IMR-90 (cell line): ENCODE measurements at regions of chr17 and their contacts with region 1.

Region 1: DNA sequence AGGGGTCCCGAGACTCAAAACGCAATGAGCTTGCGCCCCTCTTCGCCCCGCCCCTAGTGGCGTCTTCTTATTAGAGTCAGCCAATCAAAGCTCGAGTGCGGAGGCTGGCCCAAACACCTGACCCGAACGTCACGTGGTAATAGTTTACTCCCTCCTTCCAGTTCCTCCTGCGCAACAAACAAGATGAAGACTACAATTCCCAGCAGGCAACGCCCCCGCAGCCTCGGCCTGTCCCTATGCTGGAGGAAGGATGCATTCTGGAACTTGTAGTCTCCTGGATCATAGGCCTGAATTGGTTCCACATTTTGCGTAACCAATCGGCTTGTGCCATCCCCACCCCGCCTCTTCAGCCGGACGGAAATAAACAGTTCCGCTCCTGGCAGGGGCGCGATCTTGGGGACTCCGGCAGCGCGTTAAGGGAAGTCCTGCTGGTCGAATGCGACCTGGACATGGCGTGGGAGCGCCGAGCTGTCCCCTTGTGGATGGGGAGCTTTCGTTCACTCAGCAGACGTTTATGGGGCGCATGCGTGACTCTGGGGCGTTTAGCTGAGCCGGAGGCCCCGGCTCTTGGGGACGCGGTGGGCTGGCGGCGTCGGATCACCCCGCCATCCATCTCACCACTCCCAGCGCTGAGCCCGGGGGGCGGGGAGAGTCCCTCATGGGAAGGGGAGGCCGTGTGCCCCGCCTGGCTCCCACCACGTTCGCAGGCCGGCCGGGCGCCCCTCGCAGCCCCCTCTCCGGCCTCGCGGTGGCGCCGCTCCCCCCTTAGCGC is at the start of gene WBP2:
- DNase-seq: peak; percentile 100
- ATAC-seq: peak; percentile 96
- H3K4me3 ChIP-seq: peak within 1 kb of the TSS; percentile 68
- H3K27ac ChIP-seq: peak within 1 kb of the TSS; percentile 70
- H3K4me1 ChIP-seq: peaks cover 11% of the 10 kb centered on the region
- H3K27me3 ChIP-seq: no peaks in the 10 kb centered on the region
- CTCF ChIP-seq: peak; percentile 57
- POLR2A ChIP-seq: peak; percentile 85
- RAD21 ChIP-seq: peak; percentile 55; the same call in 1 of the 2 replicates
- total RNA-seq, gene WBP2: 7.8 and 9.0 TPM in 2 replicates

Region 2: DNA sequence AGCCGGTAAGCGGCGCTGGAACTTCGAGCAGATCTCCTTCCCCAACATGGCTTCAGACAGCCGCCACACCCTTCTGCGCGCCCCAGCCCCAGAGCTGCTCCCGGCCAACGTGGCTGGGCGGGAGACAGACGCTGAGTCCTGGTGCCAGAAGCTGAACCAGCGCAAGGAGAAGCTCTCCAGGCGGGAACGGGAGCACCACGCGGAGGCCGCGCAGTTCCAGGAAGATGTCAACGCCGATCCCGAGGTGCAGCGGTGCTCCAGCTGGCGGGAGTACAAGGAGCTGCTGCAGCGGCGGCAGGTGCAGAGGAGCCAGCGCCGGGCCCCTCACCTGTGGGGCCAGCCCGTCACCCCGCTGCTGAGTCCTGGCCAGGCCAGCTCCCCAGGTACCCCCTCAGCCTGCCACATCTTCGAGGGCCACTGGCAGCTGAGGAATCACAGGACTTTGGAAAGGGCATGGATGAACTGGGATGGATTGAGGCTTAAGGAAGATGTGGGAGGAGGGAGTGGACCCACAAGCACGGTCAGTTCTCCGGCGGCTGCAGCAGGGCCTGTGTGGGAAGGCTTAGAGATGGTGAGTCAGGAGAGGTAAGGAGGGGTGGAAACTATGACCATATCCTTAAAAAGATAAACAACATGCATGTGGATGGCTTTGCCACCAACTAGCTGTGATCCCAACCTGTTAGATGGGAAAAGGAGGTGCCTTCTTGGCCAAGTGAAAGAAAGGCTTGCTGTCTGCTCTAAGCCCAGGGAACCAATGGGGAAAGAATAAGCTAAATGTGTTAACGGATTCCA is 333.3 kb before region 1 on chr17:
- CTCF ChIA-PET with region 1: no interaction called
- POLR2A ChIA-PET with region 1: interaction called, 12 read pairs
- dilution Hi-C with region 1: no loop called
- in situ Hi-C with region 1: no loop called
- intact Hi-C with region 1: no loop called
- DNase-seq: peak; percentile 66
- ATAC-seq: no peak
- H3K4me3 ChIP-seq: no peak overlapping the region
- H3K27ac ChIP-seq: no peak overlapping the region
- H3K4me1 ChIP-seq: 0 out of 2 replicates have a peak, but pooled peaks cover 4% of the 10 kb centered on the region
- H3K27me3 ChIP-seq: peaks cover 14% of the 10 kb centered on the region
- CTCF ChIP-seq: no peak
- POLR2A ChIP-seq: no peak
- RAD21 ChIP-seq: no peak

Region 3: DNA sequence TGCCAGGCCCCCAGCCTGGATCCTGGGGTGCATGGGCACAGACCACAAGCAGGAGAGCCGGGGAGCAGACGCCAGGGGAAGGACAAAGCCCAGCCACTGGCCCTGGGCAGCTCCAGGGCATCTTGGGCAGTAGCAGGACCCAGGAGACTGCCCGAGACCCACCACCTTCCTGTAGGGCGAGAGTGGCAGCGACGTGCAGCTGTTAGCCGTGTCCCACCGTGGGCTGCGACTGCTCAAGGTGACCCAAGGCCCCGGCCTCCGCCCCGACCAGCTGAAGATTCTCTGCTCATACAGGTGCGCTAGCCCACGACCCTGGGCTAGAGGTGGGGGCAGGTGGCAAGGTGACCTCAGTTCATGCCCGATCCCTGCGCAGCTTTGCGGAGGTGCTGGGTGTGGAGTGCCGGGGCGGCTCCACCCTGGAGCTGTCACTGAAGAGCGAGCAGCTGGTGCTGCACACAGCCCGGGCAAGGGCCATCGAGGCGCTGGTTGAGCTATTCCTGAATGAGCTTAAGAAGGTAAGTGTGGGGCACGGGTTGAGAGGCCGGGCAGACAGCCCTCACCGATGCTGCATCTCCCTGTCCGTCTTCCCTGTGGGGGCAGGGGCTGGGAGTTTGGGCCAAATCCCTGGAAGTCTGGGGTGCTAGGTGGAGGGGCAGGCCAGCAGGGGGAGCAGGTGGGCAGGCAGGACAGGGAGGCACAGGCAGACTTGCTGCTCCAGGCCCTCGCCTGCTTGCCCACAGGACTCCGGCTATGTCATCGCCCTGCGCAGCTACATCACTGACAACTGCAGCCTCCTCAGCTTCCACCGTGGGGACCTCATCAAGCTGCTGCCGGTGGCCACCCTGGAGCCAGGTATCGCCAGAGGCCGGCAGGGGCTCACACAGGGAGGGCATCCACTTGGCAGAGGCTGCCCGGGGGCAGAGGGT is 235.7 kb before region 1 on chr17:
- CTCF ChIA-PET with region 1: no interaction called
- POLR2A ChIA-PET with region 1: no interaction called
- dilution Hi-C with region 1: no loop called
- in situ Hi-C with region 1: no loop called
- intact Hi-C with region 1: no loop called
- DNase-seq: peak; percentile 23
- ATAC-seq: peak; percentile 68
- H3K4me3 ChIP-seq: no peak overlapping the region
- H3K27ac ChIP-seq: no peak overlapping the region
- H3K4me1 ChIP-seq: peaks cover 5% of the 10 kb centered on the region; the same call in 1 of the 2 replicates
- H3K27me3 ChIP-seq: peaks cover 14% of the 10 kb centered on the region; the same call in 1 of the 2 replicates
- CTCF ChIP-seq: peak; percentile 55
- POLR2A ChIP-seq: no peak
- RAD21 ChIP-seq: peak; percentile 32

Region 4: DNA sequence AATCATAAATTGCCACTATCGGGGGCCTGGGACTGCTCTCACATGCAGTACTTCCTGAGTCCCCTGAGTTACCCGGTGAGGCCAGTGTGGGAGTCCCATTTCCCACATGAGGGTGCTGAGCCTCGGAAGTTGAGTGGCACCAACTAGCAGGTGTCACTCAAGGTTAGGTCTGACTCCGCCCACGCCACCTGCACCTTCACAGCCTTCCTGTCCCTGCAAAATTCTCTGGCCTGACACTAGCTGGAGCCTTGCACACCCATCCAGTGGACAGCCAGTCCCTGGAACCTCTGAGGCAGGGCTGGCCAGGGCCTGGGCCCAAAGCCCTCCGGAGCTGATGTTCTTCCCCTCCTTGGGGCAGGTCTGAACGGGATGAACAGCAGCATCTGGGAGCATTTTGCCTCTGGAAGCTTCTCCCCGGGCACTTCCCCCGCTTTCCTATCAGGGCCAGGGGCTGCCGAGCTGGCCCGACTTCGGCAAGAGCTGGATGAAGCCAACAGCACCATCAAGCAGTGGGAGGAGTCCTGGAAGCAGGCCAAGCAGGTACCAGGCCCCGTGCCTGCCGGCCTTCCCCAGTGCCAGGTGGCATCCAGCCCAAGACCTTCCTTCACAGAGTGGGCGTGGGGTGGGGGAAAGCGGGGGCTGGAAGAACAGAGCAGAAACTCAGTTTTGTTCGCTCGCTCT is 33.2 kb before region 1 on chr17:
- CTCF ChIA-PET with region 1: no interaction called
- POLR2A ChIA-PET with region 1: no interaction called
- dilution Hi-C with region 1: no loop called
- in situ Hi-C with region 1: no loop called
- intact Hi-C with region 1: no loop called
- DNase-seq: no peak
- ATAC-seq: no peak
- H3K4me3 ChIP-seq: no peak overlapping the region
- H3K27ac ChIP-seq: no peak overlapping the region
- H3K4me1 ChIP-seq: no peaks in the 10 kb centered on the region
- H3K27me3 ChIP-seq: no peaks in the 10 kb centered on the region
- CTCF ChIP-seq: no peak
- POLR2A ChIP-seq: no peak
- RAD21 ChIP-seq: no peak

Region 5: DNA sequence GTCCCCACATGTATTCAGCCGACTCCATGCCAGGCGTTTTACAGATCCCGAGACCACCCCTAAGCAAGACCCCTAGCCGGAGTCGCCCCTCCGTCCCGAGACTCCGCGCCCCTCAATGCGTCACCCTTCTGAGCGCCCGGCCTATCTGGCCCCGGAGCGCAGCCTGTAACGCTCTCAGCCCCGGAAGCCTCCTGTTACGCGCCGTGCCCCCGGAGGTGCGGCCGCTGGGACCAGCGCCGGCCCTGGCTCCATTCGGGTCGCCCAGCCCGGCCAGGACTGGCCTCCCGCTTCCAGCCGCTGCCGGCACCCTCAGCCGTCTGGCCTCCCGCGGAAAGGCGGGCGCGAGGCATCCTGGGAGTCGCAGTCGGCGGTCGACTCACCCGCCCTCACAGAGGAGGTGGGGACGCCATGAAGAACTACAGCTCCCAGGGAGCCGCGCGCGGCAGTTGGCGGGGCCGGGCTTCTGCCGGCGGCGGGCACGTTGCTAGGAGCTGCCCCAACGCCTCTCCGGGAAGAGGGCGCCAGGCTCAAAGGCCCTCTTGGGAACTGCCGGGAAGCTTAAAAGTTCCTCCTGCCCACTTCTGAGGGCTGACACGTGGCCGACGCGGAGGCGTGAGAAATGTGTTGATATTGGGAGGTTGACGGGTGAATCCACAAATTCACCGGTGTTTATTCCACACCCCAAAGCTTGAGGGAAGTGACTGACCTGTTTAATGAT is 85.4 kb after region 1 on chr17 and contains the start of gene FBF1:
- CTCF ChIA-PET with region 1: no interaction called
- POLR2A ChIA-PET with region 1: no interaction called
- dilution Hi-C with region 1: no loop called
- in situ Hi-C with region 1: no loop called
- intact Hi-C with region 1: no loop called
- DNase-seq: peak; percentile 90
- ATAC-seq: peak; percentile 99
- H3K4me3 ChIP-seq: peak within 1 kb of the TSS; percentile 72
- H3K27ac ChIP-seq: peak within 1 kb of the TSS; percentile 57
- H3K4me1 ChIP-seq: peaks cover 3% of the 10 kb centered on the region; the same call in 1 of the 2 replicates
- H3K27me3 ChIP-seq: no peaks in the 10 kb centered on the region
- CTCF ChIP-seq: no peak
- POLR2A ChIP-seq: peak; percentile 93
- RAD21 ChIP-seq: no peak
- total RNA-seq, gene FBF1: 4.5 and 5.3 TPM in 2 replicates

Region 6: GRCh38 chr17:76106703-76107102 is 251.2 kb after region 1 on chr17:
- CTCF ChIA-PET with region 1: no interaction called
- POLR2A ChIA-PET with region 1: interaction called, 10 read pairs
- dilution Hi-C with region 1: no loop called
- in situ Hi-C with region 1: no loop called
- intact Hi-C with region 1: no loop called
- DNase-seq: no peak
- ATAC-seq: no peak
- H3K4me3 ChIP-seq: no peak overlapping the region
- H3K27ac ChIP-seq: no peak overlapping the region
- H3K4me1 ChIP-seq: peaks cover 8% of the 10 kb centered on the region; the same call in 1 of the 2 replicates
- H3K27me3 ChIP-seq: no peaks in the 10 kb centered on the region
- CTCF ChIP-seq: no peak
- POLR2A ChIP-seq: no peak
- RAD21 ChIP-seq: no peak